Sigmoid colon (tissue), 7 donors: ENCODE measurements at regions of chr7 and their contacts with region 1.

Region 1: DNA sequence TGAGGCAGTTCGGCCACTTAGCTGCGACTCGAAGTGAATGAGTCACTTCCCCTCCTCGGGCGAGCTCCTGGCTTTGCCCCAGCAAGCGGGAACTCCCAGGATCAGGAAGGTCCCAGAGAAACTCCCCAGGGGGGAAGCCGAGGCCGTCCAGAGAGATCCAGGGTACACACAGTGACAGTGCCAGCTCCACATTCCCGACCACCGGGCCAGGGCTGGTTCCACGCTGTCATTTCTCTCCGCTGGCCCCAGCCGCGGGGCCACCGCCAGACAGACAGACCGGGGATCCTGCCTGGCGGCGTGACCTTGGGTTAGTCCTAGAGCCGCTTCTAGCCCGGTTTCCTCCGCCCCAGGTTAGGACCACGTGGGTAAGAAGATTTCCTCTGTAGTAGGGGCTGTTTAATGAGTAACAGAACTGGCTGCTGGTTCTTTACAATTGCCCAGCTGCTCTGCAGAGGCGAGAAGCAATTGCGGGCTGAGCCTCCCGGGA is 463 bp upstream of the UPP1 start:
- DNase-seq: peak; percentile 94
- H3K4me3 ChIP-seq: peak overlapping the region; percentile 72 to 92 (median 79)
- H3K27ac ChIP-seq: peak overlapping the region; percentile 79 to 92 (median 86)
- H3K4me1 ChIP-seq: peaks cover 0 to 19% (median 15%) of the 10 kb centered on the region in 4 donors
- H3K27me3 ChIP-seq: no peaks in the 10 kb centered on the region
- CTCF ChIP-seq: no peak
- EP300 ChIP-seq: no peak
- POLR2A ChIP-seq: no peak

Region 2: DNA sequence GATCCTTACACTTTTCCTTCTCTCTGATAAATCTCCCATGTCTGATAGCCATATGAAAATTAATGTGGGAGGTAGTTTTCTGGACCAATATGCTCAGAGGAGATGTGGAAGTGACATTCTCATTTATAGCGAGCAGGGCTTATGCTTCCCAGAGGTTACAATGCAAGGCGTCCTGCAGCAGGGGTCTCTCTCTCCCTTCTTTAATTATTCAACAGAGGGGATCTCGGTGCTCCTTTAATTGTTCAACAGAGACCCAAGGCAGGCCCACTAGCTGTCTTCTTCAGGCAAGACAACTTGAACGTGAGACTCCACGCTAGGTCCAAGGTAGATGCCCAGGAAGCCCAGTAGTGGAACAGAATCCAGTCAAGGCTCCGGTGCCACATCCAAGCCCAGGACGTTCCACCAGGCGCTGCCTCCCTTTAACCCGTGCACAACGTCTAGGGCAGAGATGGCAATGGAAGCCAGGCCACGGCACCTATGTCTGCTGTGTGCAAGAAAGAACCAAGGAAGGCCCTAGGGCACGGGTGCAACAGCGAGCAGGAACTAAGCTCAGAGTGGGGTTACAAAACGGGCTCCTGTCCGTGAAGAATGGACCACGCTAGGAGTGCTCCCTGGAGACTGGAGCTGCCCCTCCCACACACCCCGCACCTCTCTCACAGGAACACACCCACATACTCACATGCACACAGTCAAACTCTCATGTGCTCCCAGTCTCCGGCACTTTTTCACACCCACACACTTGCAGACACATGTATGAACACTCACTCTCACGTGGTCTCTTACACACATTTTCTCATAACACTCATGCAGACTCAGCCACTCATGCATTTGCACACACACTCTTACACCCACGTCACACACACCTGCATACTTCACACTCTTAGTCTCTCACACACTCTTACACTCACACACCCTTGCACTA is 737.1 kb before region 1 on chr7:
- intact Hi-C with region 1: no loop called
- DNase-seq: no peak
- H3K4me3 ChIP-seq: no peak overlapping the region
- H3K27ac ChIP-seq: no peak overlapping the region
- H3K4me1 ChIP-seq: no peaks in the 10 kb centered on the region
- H3K27me3 ChIP-seq: no peaks in the 10 kb centered on the region
- CTCF ChIP-seq: no peak
- EP300 ChIP-seq: no peak
- POLR2A ChIP-seq: no peak

Region 3: GRCh38 chr7:47979145-47979831 is 109.3 kb before region 1 on chr7 and contains the start of gene HUS1:
- intact Hi-C with region 1: loop called (anchors 1 kb)
- DNase-seq: peak; percentile 97
- H3K4me3 ChIP-seq: peak within 1 kb of the TSS; percentile 58 to 71 (median 67)
- H3K27ac ChIP-seq: peak within 1 kb of the TSS; percentile 81 to 86 (median 84)
- H3K4me1 ChIP-seq: peaks cover 0 to 17% (median 11%) of the 10 kb centered on the region in 4 donors
- H3K27me3 ChIP-seq: no peaks in the 10 kb centered on the region
- CTCF ChIP-seq: no peak
- EP300 ChIP-seq: no peak
- POLR2A ChIP-seq: peak; percentile 42 to 50
- total RNA-seq, gene HUS1: 17.9 to 35.0 (median 27.8) TPM

Region 4: DNA sequence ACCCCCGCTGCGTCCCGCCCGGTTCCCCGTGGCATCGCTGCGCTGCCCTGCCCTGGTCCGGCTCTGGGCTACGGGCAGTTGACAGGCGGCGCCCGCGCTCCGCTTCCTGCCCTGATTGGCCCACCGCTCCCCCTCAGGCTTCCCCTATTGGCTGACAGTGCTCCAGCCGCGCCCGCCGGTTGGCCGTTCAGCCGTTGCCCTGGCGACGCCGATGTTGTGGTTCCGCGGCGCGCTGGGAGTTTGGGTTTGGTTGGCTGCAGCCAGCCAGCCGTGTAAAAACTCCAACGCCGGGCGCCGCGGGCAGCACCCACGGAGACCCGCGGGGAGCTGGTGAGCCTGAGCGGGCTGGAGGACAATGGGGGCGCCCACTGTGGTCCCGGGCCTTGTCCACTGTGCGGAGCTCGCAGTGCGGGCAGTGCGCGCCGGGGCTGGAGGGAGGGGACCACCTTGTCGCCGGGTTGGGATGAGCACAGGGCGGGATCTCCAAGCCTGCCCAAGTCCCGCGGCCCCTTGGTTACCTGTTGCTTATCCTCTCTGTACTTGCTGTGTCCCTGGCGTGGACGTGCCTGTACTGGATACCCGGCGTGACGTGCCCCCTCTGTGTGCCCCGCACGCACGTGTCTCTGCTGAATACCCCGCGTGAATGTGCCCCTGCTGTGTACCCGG is 53.2 kb before region 1 on chr7 and contains the start of gene C7orf57:
- intact Hi-C with region 1: loop called (anchors 5 kb)
- DNase-seq: peak; percentile 92
- H3K4me3 ChIP-seq: peak within 1 kb of the TSS; percentile 28 to 60 (median 54)
- H3K27ac ChIP-seq: no peak within 1 kb of the TSS
- H3K4me1 ChIP-seq: peaks cover 0 to 16% (median 15%) of the 10 kb centered on the region in 4 donors
- H3K27me3 ChIP-seq: peaks cover 0 to 30% (median 6%) of the 10 kb centered on the region in 3 donors
- CTCF ChIP-seq: no peak
- EP300 ChIP-seq: no peak
- POLR2A ChIP-seq: no peak
- total RNA-seq, gene C7orf57: not detected